ENCODE measurements at regions of chr9 and their contacts with region 1.

Region 1: DNA sequence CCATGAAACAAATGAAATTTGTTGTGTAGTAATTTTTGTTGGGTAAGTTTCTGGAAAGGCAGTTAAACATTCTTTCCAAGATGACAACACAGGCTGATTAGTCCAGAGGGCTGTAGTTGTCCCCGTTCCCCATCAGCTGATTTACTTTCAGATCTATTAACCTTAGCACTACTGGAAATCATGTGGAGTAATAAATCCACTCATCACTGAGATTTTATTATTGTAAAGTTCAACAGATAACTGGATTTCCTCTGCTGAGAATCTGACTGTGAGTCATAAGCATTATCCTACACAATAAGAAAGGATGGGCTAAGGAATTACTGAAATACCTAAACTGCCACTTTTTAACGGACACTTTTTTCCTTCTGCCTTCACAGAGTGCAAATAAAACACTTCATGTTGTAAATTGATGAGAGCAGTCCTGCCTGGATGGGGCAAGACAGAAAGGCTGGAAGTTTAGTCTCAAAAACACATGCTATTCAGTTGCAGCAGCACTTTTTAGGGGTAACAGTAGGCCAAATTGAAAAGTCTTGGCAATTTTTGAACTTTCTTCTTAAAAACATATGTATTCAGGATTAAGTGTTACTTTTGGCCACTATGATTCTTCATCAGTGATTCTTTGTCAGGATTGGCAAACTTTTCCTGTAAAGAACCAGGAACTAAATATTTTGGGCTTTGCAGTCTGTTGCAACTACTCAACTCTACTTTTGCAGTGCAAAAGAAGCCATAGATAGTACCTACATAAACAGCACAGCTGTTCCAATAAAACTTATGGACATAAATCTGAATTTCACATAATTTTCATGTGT is 7.0 kb downstream of the STOM start:
- DNase-seq: peak; percentile 92
- H3K4me3 ChIP-seq: no peak overlapping the region
- H3K27me3 ChIP-seq: no peaks in the 10 kb centered on the region
- CTCF ChIP-seq: no peak

Region 2: DNA sequence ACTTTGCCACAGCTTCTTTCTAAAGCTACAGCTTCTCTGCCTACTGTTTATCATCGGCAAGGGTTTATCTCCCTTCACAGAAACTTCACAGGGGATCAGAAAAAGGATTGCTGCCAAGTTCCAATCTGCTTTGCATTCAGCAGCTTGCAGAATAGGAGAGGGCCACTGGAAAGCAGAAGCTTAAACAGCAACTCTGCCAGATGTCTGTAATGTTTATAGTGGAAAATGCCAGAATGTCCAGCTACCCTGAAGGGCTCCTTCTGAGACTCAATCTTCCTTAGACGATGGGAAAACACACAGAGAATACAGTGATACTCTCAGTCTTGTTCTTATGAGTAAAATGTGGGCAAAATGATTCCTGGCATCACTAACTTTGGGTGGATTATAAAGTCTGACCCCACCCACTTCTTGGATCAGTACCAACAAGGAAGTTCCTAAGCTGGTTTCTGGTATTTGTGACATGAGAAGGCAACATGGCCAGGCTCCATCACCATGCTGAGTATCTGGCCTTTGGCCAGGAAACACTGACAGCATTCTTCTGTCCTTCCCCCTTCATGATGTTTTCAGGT is 11.9 kb before region 1 on chr9:
- CTCF ChIA-PET with region 1: interaction called, 5 read pairs
- POLR2A ChIA-PET with region 1: interaction called, 22 read pairs
- DNase-seq: peak; percentile 80
- H3K4me3 ChIP-seq: no peak overlapping the region
- H3K27me3 ChIP-seq: no peaks in the 10 kb centered on the region
- CTCF ChIP-seq: no peak

Region 3: GRCh38 chr9:121963528-121963995 is 600.5 kb after region 1 on chr9:
- CTCF ChIA-PET with region 1: no interaction called
- POLR2A ChIA-PET with region 1: no interaction called
- DNase-seq: no peak
- H3K4me3 ChIP-seq: no peak overlapping the region
- H3K27me3 ChIP-seq: no peaks in the 10 kb centered on the region
- CTCF ChIP-seq: no peak